Upper lobe of right lung (tissue), 1 donor: ENCODE measurements at regions of chr19 and their contacts with region 1.

Region 1: GRCh38 chr19:15276636-15277215 is 44.5 kb upstream of the EPHX3 start:
- DNase-seq: no peak
- ATAC-seq: peak; percentile 38
- H3K4me3 ChIP-seq: no peak overlapping the region
- H3K27ac ChIP-seq: peak overlapping the region; percentile 36
- H3K4me1 ChIP-seq: peaks cover 86% of the 10 kb centered on the region
- H3K27me3 ChIP-seq: no peaks in the 10 kb centered on the region
- CTCF ChIP-seq: no peak

Region 2: GRCh38 chr19:14871619-14872230 is 405.0 kb before region 1 on chr19:
- intact Hi-C with region 1: no loop called
- DNase-seq: no peak
- ATAC-seq: no peak
- H3K4me3 ChIP-seq: no peak overlapping the region
- H3K27ac ChIP-seq: no peak overlapping the region
- H3K4me1 ChIP-seq: no peaks in the 10 kb centered on the region
- H3K27me3 ChIP-seq: peaks cover 10% of the 10 kb centered on the region
- CTCF ChIP-seq: peak; percentile 43

Region 3: GRCh38 chr19:15323496-15324227 is 46.9 kb after region 1 on chr19:
- intact Hi-C with region 1: loop called (anchors 10 kb)
- DNase-seq: peak; percentile 66
- ATAC-seq: peak; percentile 57
- H3K4me3 ChIP-seq: no peak overlapping the region
- H3K27ac ChIP-seq: peak overlapping the region; percentile 13
- H3K4me1 ChIP-seq: peaks cover 92% of the 10 kb centered on the region
- H3K27me3 ChIP-seq: no peaks in the 10 kb centered on the region
- CTCF ChIP-seq: no peak